BJ (cell line): ENCODE measurements at regions of chr19 and their contacts with region 1.

Region 1: GRCh38 chr19:28466107-28467045 is 746.6 kb downstream of the UQCRFS1 start:
- DNase-seq: no peak
- H3K4me3 ChIP-seq: no peak overlapping the region
- H3K27me3 ChIP-seq: no peaks in the 10 kb centered on the region; the same call in 1 of the 2 replicates
- CTCF ChIP-seq: peak; percentile 79

Region 2: DNA sequence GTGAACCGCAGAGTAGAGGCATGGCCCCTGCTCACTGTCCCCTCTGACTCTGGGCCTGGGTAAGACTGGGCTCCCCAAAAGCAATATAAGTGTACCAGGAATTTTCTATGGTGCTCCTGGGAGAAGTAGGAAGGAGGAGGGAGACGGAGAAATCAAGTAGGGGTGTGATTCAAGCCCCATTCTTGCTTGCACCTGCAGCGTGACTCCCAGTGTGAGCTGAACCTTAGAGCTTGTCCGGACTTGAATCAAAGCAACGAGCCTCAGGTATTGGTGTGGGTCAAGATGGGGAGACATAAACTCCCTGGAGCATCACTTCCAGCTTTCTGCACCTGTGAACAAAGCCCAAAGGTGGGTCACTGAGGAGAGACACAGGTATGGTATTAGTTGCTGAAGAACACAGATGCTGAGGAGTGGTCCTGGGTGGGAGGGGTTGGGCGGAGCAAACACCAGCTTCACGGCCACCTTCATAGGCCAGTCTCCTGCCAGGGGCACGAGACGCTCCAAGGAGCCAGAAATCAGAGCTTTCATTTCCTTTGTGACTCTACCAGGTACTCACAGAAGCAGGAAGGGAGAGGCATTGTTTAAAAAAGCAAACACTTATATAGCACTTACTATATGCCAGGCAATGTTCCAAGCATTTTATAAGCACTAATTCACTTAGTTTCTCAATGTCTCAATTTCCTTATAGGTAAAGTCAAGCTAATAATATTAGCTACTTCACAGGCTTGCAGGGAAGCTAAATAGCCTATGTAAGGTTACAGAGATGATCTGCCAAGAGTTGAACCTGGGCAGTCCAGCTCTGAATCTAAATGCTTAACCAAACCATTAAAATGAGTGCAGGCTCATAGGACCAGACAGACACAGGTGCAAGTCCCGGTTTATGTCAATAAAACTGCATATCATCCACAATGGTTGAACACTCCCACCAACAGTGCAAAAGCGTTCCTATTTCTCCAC is 28.7 kb before region 1 on chr19:
- CTCF ChIA-PET with region 1: no interaction called
- POLR2A ChIA-PET with region 1: no interaction called
- DNase-seq: no peak
- H3K4me3 ChIP-seq: no peak overlapping the region
- H3K27me3 ChIP-seq: no peaks in the 10 kb centered on the region
- CTCF ChIP-seq: no peak

Region 3: DNA sequence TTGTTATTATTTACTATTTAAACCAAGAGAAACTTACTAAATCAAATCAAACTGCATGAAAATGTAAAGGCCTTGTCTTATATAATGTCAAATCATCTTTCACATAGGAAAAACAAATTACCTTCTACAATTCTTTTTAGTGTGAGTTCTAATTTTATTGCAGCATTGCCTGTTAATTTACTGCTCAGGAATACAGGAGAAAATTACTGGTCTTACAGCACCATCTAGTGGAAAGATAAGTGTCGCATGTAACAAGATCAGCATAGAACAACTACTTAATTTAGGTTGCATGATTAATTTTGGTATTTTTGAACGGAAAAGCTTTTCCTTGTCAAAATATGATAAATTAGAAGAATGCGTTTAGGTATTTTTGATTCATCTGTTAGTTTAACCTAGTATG is 243.9 kb after region 1 on chr19:
- CTCF ChIA-PET with region 1: interaction called, 26 read pairs
- POLR2A ChIA-PET with region 1: no interaction called
- DNase-seq: no peak
- H3K4me3 ChIP-seq: no peak overlapping the region
- H3K27me3 ChIP-seq: no peaks in the 10 kb centered on the region
- CTCF ChIP-seq: peak; percentile 61

Region 4: DNA sequence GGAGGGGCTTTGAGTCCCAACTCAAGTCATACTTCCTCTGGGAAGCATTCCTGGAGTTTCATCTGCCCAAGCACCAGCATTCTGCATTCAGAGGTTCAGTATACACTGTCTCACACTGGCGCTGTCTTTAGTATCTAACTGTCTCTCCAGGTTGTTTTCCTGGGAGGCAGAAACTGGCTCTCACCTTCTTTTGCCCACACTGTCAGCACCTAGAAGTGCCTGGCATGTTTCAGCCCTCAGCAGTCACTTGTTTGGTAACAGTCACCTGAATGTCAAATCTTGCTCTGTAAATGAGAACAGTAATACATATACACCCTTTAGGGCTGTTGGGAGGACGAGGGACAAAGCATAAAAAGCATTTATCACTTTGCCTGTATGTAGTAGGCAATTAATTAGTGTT is 406.9 kb after region 1 on chr19:
- CTCF ChIA-PET with region 1: no interaction called
- POLR2A ChIA-PET with region 1: no interaction called
- DNase-seq: no peak
- H3K4me3 ChIP-seq: no peak overlapping the region
- H3K27me3 ChIP-seq: peaks cover 3% of the 10 kb centered on the region; the same call in 1 of the 2 replicates
- CTCF ChIP-seq: no peak